Endothelial cell of umbilical vein (primary cell): ENCODE measurements at regions of chr22 and their contacts with region 1.

Region 1: GRCh38 chr22:48574776-48575565 is 1252.7 kb downstream of the BRD1 start:
- DNase-seq: no peak
- H3K4me3 ChIP-seq: no peak overlapping the region
- H3K27ac ChIP-seq: no peak overlapping the region
- H3K4me1 ChIP-seq: no peaks in the 10 kb centered on the region
- H3K27me3 ChIP-seq: peaks cover 12 to 15% of the 10 kb centered on the region in 2 experiments
- CTCF ChIP-seq: peak in 1 of 2 donors; percentile 25
- POLR2A ChIP-seq: no peak

Region 2: GRCh38 chr22:48594016-48594756 is 19.2 kb after region 1 on chr22:
- CTCF ChIA-PET with region 1: no interaction called
- POLR2A ChIA-PET with region 1: no interaction called
- dilution Hi-C with region 1: no loop called
- intact Hi-C with region 1: no loop called
- DNase-seq: no peak
- H3K4me3 ChIP-seq: no peak overlapping the region
- H3K27ac ChIP-seq: no peak overlapping the region
- H3K4me1 ChIP-seq: no peaks in the 10 kb centered on the region
- H3K27me3 ChIP-seq: no peaks in the 10 kb centered on the region
- CTCF ChIP-seq: no peak
- POLR2A ChIP-seq: no peak

Region 3: GRCh38 chr22:48757985-48758561 is 183.1 kb after region 1 on chr22:
- CTCF ChIA-PET with region 1: no interaction called
- POLR2A ChIA-PET with region 1: no interaction called
- dilution Hi-C with region 1: no loop called
- intact Hi-C with region 1: no loop called
- DNase-seq: no peak
- H3K4me3 ChIP-seq: no peak overlapping the region
- H3K27ac ChIP-seq: no peak overlapping the region
- H3K4me1 ChIP-seq: no peaks in the 10 kb centered on the region
- H3K27me3 ChIP-seq: no peaks in the 10 kb centered on the region
- CTCF ChIP-seq: no peak
- POLR2A ChIP-seq: no peak

Region 4: DNA sequence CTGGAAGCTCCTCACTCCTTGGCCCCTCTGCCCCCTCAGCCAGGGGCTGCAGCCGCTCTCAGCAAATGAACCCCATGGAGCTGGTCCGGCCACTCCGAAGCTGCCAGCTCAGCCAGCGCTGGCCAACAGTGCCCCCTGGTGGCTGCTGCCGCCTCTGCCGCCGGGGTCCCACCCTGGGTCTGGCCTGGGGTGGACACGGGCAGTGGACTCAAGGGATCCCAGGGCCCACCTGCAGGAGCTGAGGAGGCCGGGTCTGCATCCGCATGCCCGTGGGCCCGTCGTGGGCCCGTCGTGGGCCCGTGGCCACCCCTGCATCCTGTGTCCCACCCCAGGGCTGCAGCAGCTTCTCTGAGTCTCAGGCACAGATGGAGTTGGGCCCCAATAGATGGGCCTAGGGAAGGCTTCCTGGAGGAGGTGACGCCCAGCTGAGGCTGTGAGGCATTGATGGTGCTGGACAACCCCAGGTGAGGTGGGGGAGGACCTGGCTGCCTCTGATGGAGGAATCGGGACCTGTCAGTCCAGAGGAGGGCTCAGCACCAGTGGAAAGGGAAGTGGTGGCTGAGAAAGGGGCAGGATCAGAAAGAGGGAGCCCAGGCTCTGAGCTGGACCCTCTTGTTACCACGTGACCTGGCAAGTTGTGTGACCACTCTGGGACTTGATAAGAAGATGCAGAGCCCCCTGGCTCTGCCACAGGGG is 730.4 kb after region 1 on chr22:
- CTCF ChIA-PET with region 1: no interaction called
- POLR2A ChIA-PET with region 1: no interaction called
- dilution Hi-C with region 1: no loop called
- intact Hi-C with region 1: loop called (anchors 10 kb)
- DNase-seq: peak; percentile 4
- H3K4me3 ChIP-seq: no peak overlapping the region
- H3K27ac ChIP-seq: no peak overlapping the region
- H3K4me1 ChIP-seq: no peaks in the 10 kb centered on the region
- H3K27me3 ChIP-seq: no peaks in the 10 kb centered on the region
- CTCF ChIP-seq: peak; percentile 72 to 77
- POLR2A ChIP-seq: no peak